ENCODE measurements at regions of chr3 and their contacts with region 1.

Region 1: DNA sequence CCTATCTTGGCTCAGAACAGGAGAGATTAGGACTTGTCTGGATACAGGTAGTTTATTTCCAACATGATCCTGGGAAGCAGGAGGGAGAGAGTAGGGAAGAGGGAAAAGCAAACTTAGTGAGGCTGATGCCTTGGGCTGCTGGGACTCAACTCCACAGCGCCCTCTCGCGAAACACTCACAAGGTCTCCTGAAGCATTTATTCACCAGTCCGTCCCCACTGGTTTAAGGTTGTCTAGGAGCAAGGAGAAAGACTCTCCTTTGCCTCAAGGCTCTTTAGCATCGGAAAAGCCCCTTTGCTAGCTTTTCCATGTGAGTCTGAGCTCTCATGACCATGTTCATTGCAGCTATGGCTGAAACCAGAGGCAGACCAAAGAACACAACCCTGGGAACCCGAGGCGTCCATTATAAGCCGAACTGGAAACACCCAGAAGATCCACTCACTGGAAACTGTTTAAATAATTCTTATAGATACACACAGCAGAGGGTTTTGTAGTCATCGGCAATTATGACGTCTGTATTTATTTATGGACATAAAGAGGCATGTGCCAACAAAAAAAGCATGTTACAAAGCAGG is 244.5 kb downstream of the CD47 start:
- DNase-seq: peak; percentile 74
- H3K4me3 Mint-ChIP-seq: no peak overlapping the region
- H3K27ac Mint-ChIP-seq: no peak overlapping the region
- H3K4me1 Mint-ChIP-seq: peaks cover 11% of the 10 kb centered on the region
- H3K27me3 Mint-ChIP-seq: no peaks in the 10 kb centered on the region
- CTCF ChIP-seq: peak; percentile 67

Region 2: GRCh38 chr3:107676469-107677309 is 169.7 kb before region 1 on chr3:
- CTCF ChIA-PET with region 1: no interaction called
- intact Hi-C with region 1: loop called (anchors 10 kb)
- DNase-seq: no peak
- H3K4me3 Mint-ChIP-seq: no peak overlapping the region
- H3K27ac Mint-ChIP-seq: no peak overlapping the region
- H3K4me1 Mint-ChIP-seq: peaks cover 11% of the 10 kb centered on the region
- H3K27me3 Mint-ChIP-seq: no peaks in the 10 kb centered on the region
- CTCF ChIP-seq: peak; percentile 54

Region 3: DNA sequence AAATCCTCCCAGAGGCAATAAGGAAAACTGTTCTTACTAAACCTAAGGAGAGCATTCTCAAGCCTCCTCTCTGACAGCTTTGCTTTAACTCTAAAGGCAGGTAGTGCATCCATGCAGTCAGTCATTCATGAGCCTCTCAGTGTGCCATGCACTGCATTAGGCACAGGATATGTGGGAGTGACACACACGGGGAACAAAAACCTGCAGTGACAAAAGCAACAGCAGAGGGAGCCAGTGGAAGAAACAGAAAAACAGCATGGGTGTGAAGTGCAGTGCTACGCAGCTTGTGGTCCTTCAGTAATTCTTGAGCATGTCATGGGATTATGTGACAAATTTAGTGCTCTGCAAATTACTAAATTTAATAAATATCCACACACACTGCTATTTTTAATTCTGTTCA is 92.9 kb before region 1 on chr3:
- CTCF ChIA-PET with region 1: interaction called, 4 read pairs
- intact Hi-C with region 1: loop called (anchors 1 kb)
- DNase-seq: peak; percentile 50
- H3K4me3 Mint-ChIP-seq: no peak overlapping the region
- H3K27ac Mint-ChIP-seq: no peak overlapping the region
- H3K4me1 Mint-ChIP-seq: peaks cover 6% of the 10 kb centered on the region
- H3K27me3 Mint-ChIP-seq: no peaks in the 10 kb centered on the region
- CTCF ChIP-seq: no peak